ENCODE measurements at regions of chr2 and their contacts with region 1.

Region 1: GRCh38 chr2:54680397-54681041 is 42.9 kb upstream of the EML6 start:
- DNase-seq: peak; percentile 74
- ATAC-seq: peak; percentile 91
- H3K4me3 Mint-ChIP-seq: peak overlapping the region; percentile 73
- H3K27ac Mint-ChIP-seq: peak overlapping the region; percentile 78
- H3K4me1 Mint-ChIP-seq: peaks cover 53% of the 10 kb centered on the region
- H3K27me3 Mint-ChIP-seq: peaks cover 64% of the 10 kb centered on the region

Region 2: DNA sequence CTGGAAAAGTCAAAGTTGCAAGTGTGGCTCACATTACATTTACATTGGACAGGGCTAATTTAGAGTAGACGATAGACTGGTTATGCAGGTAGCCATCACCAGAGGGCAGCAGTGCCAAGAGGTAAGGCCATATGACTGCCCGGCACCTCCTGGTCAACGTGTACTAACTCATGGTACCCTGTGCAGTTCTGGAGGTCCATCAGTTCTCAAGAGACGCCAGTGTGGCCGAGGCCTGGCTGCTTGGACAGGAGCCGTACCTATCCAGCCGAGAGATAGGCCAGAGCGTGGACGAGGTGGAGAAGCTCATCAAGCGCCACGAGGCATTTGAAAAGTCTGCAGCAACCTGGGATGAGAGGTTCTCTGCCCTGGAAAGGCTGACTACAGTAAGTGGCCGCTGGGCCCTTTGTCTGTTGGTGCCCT is 22.8 kb before region 1 on chr2:
- CTCF ChIA-PET with region 1: interaction called, 17 read pairs
- DNase-seq: peak; percentile 52
- ATAC-seq: no peak
- H3K4me3 Mint-ChIP-seq: no peak overlapping the region
- H3K27ac Mint-ChIP-seq: no peak overlapping the region
- H3K4me1 Mint-ChIP-seq: peaks cover 22% of the 10 kb centered on the region
- H3K27me3 Mint-ChIP-seq: no peaks in the 10 kb centered on the region

Region 3: DNA sequence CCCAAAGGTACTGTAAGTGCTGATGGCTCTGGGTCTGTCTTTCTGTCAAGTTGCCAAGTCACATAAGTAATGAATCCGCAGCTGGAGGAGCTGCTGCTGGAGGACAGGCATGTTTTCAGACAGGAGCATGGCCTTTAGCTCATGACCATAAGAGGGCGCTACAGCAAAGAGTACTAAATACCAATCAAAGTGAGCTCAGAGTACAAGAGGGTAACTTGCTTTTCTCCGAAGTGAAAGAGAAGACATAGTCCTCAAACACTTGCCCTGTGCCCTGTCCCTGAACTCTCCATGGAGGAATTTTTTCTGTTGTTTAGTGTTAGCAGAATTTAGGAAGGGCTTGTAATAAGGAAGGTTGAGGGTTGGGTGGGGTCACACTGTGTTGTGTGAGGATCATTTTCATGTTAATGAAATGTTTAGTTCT is 15.1 kb before region 1 on chr2:
- CTCF ChIA-PET with region 1: interaction called, 41 read pairs
- DNase-seq: peak; percentile 61
- ATAC-seq: peak; percentile 49
- H3K4me3 Mint-ChIP-seq: no peak overlapping the region
- H3K27ac Mint-ChIP-seq: no peak overlapping the region
- H3K4me1 Mint-ChIP-seq: peaks cover 17% of the 10 kb centered on the region
- H3K27me3 Mint-ChIP-seq: no peaks in the 10 kb centered on the region